ENCODE measurements at regions of chr11 and their contacts with region 1.

Region 1: GRCh38 chr11:91513734-91514133 is 710.9 kb upstream of the FAT3 start:
- DNase-seq: no peak
- H3K4me3 ChIP-seq: no peak overlapping the region
- H3K27ac ChIP-seq: no peak overlapping the region
- H3K4me1 ChIP-seq: no peaks in the 10 kb centered on the region
- H3K27me3 ChIP-seq: no peaks in the 10 kb centered on the region
- CTCF ChIP-seq: no peak
- EP300 ChIP-seq: no peak
- POLR2A ChIP-seq: no peak

Region 2: GRCh38 chr11:91421641-91422040 is 92.1 kb before region 1 on chr11:
- in situ Hi-C with region 1: loop called in 1 of 4 experiments (anchors 25 kb)
- intact Hi-C with region 1: no loop called
- DNase-seq: no peak
- H3K4me3 ChIP-seq: no peak overlapping the region
- H3K27ac ChIP-seq: no peak overlapping the region
- H3K4me1 ChIP-seq: no peaks in the 10 kb centered on the region
- H3K27me3 ChIP-seq: no peaks in the 10 kb centered on the region
- CTCF ChIP-seq: no peak
- EP300 ChIP-seq: no peak
- POLR2A ChIP-seq: no peak

Region 3: GRCh38 chr11:91653079-91653754 is 139.5 kb after region 1 on chr11:
- in situ Hi-C with region 1: no loop called
- intact Hi-C with region 1: no loop called
- DNase-seq: no peak
- H3K4me3 ChIP-seq: no peak overlapping the region
- H3K27ac ChIP-seq: no peak overlapping the region
- H3K4me1 ChIP-seq: no peaks in the 10 kb centered on the region
- H3K27me3 ChIP-seq: no peaks in the 10 kb centered on the region
- CTCF ChIP-seq: no peak
- EP300 ChIP-seq: no peak
- POLR2A ChIP-seq: no peak

Region 4: DNA sequence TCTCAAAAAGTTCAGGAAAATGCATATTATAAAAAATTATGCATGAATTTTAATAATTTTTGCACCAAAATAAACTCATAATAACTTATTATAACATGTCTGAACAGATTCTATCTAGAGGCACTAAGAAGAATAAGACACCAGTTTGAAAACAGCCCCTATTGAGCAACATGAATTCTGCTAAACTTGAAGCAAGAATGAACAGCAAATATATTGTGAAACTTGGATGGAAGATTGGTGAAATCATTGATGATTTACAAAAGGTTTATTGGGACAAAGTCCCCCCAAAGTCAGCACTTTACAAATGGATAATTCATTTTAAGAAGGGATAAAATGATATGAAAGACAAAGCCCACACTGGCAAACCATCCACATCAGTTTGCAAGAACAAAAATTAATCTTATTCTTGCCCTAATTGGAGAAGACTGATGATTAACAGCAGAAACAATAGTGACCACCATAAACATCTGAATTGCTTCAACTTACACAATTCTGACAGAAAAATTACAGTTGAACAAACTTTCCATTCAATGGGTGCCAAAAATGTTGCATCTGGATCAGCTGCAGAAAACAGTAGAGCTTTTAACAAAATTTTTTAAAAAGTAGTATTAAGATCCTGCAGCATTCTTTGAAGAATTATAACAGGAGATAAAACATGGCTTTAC is 453.4 kb after region 1 on chr11:
- in situ Hi-C with region 1: no loop called
- intact Hi-C with region 1: no loop called
- DNase-seq: no peak
- H3K4me3 ChIP-seq: no peak overlapping the region
- H3K27ac ChIP-seq: no peak overlapping the region
- H3K4me1 ChIP-seq: no peaks in the 10 kb centered on the region
- H3K27me3 ChIP-seq: no peaks in the 10 kb centered on the region
- CTCF ChIP-seq: no peak
- EP300 ChIP-seq: no peak
- POLR2A ChIP-seq: no peak